OCI-LY7 (cell line): ENCODE measurements at regions of chr7 and their contacts with region 1.

Region 1: DNA sequence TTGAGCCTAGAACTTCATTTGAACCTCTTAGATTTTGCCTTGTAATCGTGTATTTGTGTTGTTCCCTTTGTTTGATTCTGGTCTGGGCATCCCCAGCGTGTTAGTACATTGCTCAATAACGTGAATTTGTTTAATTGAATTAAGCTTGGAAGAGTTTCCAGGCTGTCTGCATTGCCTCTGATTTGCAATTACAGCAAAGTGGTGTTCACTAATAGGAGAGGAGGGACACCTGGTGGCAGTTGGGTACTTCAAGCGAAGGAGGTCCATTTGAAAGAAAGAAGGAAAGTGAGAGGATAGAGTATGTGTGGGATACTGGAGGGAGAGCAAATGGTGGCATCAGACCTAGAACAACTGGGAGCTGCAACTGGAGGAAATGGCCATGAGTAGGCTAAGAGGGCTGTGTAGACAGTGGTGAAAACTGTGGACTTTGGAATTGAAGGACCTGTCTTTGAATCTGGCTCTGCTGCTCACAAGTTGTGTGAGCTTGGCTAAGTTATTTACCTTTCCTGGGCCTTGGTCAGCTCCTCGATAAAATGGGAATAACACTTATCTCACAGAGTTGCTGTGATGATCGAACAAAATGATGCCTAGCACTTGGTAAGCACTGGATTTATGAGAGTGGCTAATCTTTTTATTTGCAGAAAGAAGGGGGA is 15.1 kb downstream of the LSMEM1 start:
- DNase-seq: peak; percentile 65
- H3K4me3 ChIP-seq: no peak overlapping the region
- H3K27ac ChIP-seq: no peak overlapping the region
- H3K4me1 ChIP-seq: no peaks in the 10 kb centered on the region
- CTCF ChIP-seq: peak; percentile 89

Region 2: DNA sequence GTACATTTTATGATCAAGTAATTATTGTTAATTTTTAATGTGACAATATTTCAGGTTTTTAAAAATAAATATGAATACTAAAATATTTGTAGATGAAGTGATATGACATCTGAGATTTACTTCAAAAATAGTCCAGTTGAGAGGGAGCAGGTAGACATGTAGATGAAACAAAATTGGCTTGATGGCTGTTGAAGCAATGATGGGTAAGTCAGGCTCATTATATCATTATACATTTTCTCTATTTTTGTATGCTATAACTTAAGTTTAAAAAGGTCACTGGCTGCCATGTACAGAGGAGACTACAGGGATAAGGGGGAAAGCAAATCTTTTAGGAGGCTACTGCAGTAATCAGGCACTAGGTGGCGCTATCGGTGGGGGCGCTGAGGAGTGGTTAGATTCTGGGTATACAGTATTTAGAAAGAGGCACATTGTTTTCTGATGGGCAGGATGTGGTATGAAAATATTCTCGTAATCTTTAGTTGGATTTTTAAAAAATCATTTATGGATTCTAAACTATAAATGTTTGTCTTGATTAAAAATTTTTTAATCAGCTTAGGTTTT is 743.8 kb before region 1 on chr7:
- CTCF ChIA-PET with region 1: no interaction called
- POLR2A ChIA-PET with region 1: no interaction called
- intact Hi-C with region 1: loop called (anchors 5 kb)
- DNase-seq: peak; percentile 48
- H3K4me3 ChIP-seq: no peak overlapping the region
- H3K27ac ChIP-seq: no peak overlapping the region
- H3K4me1 ChIP-seq: no peaks in the 10 kb centered on the region
- CTCF ChIP-seq: peak; percentile 93

Region 3: GRCh38 chr7:111855161-111855856 is 640.6 kb before region 1 on chr7:
- CTCF ChIA-PET with region 1: no interaction called
- POLR2A ChIA-PET with region 1: no interaction called
- intact Hi-C with region 1: loop called (anchors 10 kb)
- DNase-seq: peak; percentile 18
- H3K4me3 ChIP-seq: no peak overlapping the region
- H3K27ac ChIP-seq: no peak overlapping the region
- H3K4me1 ChIP-seq: no peaks in the 10 kb centered on the region
- CTCF ChIP-seq: peak; percentile 72

Region 4: GRCh38 chr7:112079673-112080072 is 416.3 kb before region 1 on chr7:
- CTCF ChIA-PET with region 1: no interaction called
- POLR2A ChIA-PET with region 1: no interaction called
- intact Hi-C with region 1: loop called (anchors 10 kb)
- DNase-seq: no peak
- H3K4me3 ChIP-seq: no peak overlapping the region
- H3K27ac ChIP-seq: no peak overlapping the region
- H3K4me1 ChIP-seq: peaks cover 10% of the 10 kb centered on the region
- CTCF ChIP-seq: peak; percentile 52

Region 5: DNA sequence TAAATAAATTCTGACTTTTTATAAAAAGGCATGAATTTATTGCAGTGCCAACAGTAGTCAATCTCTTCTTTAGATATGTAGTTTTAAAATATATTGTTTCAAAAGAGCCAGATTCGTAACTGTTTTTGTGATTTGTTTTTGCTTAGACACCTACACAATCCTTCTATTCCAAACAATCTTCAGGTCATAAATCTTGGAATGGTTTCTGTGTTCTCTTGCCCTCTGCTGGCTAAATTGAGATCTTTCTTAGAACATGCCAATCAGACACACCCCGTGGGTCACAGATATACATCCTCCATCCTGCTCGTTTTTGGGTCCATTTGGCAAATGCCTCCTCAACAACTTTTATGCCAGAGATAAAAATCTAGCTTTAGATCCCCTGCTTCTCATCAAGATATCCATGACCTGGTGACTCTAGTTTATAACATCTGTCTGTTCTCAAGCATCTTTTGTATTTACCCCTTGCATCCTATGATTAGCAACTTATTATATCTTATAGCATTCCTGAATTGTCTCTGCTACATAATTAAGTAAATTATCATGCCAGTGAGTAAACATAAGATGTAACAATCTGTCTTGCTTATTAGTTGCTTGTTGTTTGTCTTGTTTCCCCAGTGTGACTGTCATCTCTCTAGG is 81.0 kb before region 1 on chr7:
- CTCF ChIA-PET with region 1: no interaction called
- POLR2A ChIA-PET with region 1: no interaction called
- intact Hi-C with region 1: loop called (anchors 5 kb)
- DNase-seq: peak; percentile 51
- H3K4me3 ChIP-seq: no peak overlapping the region
- H3K27ac ChIP-seq: no peak overlapping the region
- H3K4me1 ChIP-seq: peaks cover 4% of the 10 kb centered on the region
- CTCF ChIP-seq: peak; percentile 83